Right ventricle myocardium inferior (tissue), 1 donor: ENCODE measurements at regions of chr9 and their contacts with region 1.

Region 1: DNA sequence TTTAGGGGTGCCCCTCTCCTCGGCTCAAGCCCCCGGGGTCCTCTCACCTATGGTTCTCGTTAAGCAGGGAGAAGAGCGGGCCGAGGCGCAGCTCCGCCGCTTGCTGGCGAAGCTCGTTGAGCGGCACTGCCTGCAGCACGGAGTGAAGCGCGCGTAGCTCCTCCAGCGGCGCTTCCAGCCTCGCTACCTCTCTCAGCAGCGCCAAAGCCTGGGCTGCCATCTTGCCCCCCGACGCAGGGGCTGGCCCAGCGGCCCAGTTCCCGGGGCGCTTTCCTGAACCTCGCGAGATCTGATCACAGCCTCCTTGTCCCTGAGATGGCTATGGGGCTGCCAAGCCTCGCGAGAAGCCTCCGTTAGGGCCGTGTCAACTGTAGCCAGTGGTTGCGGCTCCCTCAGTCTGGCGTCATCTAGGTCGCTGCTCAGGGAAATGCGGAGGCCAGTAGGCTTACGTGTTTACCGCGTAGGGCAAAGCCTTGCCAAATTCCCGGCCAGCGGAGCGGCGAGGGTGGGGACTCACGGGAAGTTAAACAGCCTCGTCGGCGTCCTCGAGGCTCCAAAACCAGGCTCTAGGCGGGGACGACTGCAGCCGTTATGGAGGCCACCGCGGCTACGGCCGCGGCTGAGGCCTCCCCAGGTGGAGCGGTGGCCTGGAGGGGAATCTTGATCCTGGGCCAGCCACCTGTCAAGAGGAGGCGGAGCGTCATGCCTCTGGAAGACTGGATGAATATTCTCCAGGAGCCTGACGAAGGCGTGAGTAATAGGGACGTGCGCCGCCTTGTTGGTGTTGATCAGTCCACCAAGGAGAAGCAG is at the start of gene PSMD5:
- DNase-seq: peak; percentile 99
- ATAC-seq: peak; percentile 99
- total RNA-seq, gene PSMD5: 15.3 TPM

Region 2: DNA sequence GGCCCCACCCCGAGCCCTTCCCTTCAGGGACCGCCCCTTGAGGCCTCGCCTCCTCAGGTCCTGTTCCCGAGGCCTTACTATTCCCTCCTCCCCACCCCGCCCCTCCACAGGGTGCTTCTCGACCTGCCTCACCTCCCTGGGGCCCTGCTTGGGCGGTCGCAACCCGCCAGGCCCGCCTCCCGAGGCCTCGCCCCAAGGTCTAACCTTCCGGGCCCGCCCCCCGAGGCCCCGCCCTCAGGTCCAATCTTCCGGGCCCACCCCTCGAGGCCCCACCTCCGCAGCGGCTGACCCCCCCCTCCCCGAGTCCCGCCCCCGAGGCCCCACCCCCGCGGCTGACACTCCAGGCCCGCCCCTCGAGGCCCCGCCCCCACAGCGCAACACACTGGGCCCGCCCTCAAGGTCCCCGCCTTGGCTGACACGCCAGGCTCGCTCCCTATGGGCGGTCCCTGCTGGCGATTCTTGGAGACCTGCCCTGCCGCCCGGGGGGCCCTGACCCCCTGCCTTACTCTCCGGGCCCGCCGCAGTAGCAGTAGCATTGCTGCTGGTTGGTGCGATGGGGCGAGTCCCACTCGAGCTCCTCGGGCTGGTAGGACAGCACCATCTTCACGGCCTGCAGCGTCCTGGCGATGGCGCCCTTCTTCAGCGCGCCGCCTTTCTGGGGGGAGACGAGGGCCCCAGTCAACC is 25.9 kb after region 1 on chr9:
- intact Hi-C with region 1: loop called (anchors 2 kb)
- DNase-seq: peak; percentile 98
- ATAC-seq: peak; percentile 95